ENCODE measurements at regions of chr12 and their contacts with region 1.

Region 1: GRCh38 chr12:39619660-39620433 is at the start of gene ABCD2:
- DNase-seq: peak; percentile 41 to 87 (median 83)
- ATAC-seq: peak; percentile 88
- H3K4me3 ChIP-seq: peak within 1 kb of the TSS; percentile 70
- H3K4me3 Mint-ChIP-seq: no peak within 1 kb of the TSS
- H3K27ac ChIP-seq: peak within 1 kb of the TSS; percentile 91
- H3K27ac Mint-ChIP-seq: no peak within 1 kb of the TSS
- H3K4me1 ChIP-seq: peaks cover 27 to 32% of the 10 kb centered on the region in 2 donors
- H3K4me1 Mint-ChIP-seq: peaks cover 16 to 57% (median 42%) of the 10 kb centered on the region in 7 donors
- H3K27me3 ChIP-seq: no peaks in the 10 kb centered on the region
- H3K27me3 Mint-ChIP-seq: no peaks in the 10 kb centered on the region
- total RNA-seq, gene ABCD2: 7.7 to 32.9 (median 21.0) TPM

Region 2: DNA sequence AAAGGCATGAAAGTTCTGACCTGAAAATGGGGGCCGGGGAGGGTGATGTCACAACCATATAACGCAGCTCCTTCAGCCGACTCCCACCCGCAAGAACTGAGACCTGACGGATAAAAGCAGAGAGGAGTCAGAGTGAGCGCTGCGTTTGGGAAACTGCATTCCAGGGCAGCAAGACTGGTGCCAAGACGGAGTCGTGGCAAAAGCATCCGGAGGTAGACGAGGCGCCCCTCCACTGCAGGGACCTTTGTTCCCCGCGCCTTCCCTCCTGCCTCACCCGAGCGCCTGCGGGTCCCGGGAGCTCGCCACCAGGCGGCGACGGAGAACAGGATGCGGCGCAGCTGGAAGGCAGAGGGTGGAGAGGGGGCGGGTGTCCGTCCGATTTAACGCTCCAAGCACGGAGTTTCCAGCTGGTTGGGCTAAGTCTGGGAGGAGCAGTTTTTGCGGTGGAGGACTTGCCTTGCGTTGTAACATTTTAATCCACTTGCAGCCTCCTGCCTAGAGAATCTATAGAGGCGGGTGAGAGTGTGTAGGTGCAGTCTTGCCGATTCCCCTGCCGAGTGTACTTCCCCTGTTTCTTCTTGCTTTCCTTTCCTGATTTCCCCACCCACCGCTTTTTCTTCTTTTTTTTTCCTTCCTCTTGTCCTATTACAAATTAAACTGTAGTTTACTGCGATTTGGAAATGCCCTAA is 713.2 kb before region 1 on chr12:
- CTCF ChIA-PET with region 1: no interaction called
- POLR2A ChIA-PET with region 1: no interaction called
- intact Hi-C with region 1: loop called (anchors 10 kb)
- DNase-seq: peak; percentile 25 to 83 (median 49)
- ATAC-seq: peak; percentile 77
- H3K4me3 ChIP-seq: peak overlapping the region; percentile 76
- H3K4me3 Mint-ChIP-seq: peak overlapping the region; percentile 86 to 97 (median 92)
- H3K27ac ChIP-seq: no peak overlapping the region
- H3K27ac Mint-ChIP-seq: peak overlapping the region in 6 of 9 donors; percentile 38 to 95 (median 56)
- H3K4me1 ChIP-seq: no peaks in the 10 kb centered on the region
- H3K4me1 Mint-ChIP-seq: peaks cover 17 to 36% (median 25%) of the 10 kb centered on the region in 7 donors
- H3K27me3 ChIP-seq: no peaks in the 10 kb centered on the region
- H3K27me3 Mint-ChIP-seq: peaks cover 6 to 27% (median 21%) of the 10 kb centered on the region in 5 donors

Region 3: GRCh38 chr12:39587225-39587624 is 32.6 kb before region 1 on chr12:
- CTCF ChIA-PET with region 1: interaction called, 10 read pairs
- POLR2A ChIA-PET with region 1: interaction called, 4 read pairs
- intact Hi-C with region 1: loop called (anchors 1 to 2 kb)
- DNase-seq: peak in 7 of 9 donors; percentile 10 to 56 (median 31)
- ATAC-seq: peak; percentile 66
- H3K4me3 ChIP-seq: no peak overlapping the region
- H3K4me3 Mint-ChIP-seq: no peak overlapping the region
- H3K27ac ChIP-seq: no peak overlapping the region
- H3K27ac Mint-ChIP-seq: no peak overlapping the region
- H3K4me1 ChIP-seq: no peaks in the 10 kb centered on the region
- H3K4me1 Mint-ChIP-seq: peaks cover 0 to 17% (median 9%) of the 10 kb centered on the region in 7 donors
- H3K27me3 ChIP-seq: no peaks in the 10 kb centered on the region
- H3K27me3 Mint-ChIP-seq: no peaks in the 10 kb centered on the region

Region 4: GRCh38 chr12:39605501-39605900 is 14.3 kb before region 1 on chr12:
- CTCF ChIA-PET with region 1: interaction called, 6 read pairs
- POLR2A ChIA-PET with region 1: interaction called, 20 read pairs
- intact Hi-C with region 1: loop called (anchors 1 kb)
- DNase-seq: no peak
- ATAC-seq: no peak
- H3K4me3 ChIP-seq: no peak overlapping the region
- H3K4me3 Mint-ChIP-seq: no peak overlapping the region
- H3K27ac ChIP-seq: no peak overlapping the region
- H3K27ac Mint-ChIP-seq: peak overlapping the region in 4 of 9 donors; percentile 7 to 73 (median 40)
- H3K4me1 ChIP-seq: peaks cover 0 to 5% of the 10 kb centered on the region in 2 donors
- H3K4me1 Mint-ChIP-seq: peaks cover 3 to 54% (median 34%) of the 10 kb centered on the region in 7 donors
- H3K27me3 ChIP-seq: no peaks in the 10 kb centered on the region
- H3K27me3 Mint-ChIP-seq: no peaks in the 10 kb centered on the region

Region 5: GRCh38 chr12:39671898-39672875 is 52.3 kb after region 1 on chr12:
- CTCF ChIA-PET with region 1: interaction called, 12 read pairs
- POLR2A ChIA-PET with region 1: interaction called, 22 read pairs
- intact Hi-C with region 1: loop called in 1 of 2 experiments (anchors 1 kb)
- DNase-seq: no peak
- ATAC-seq: no peak
- H3K4me3 ChIP-seq: no peak overlapping the region
- H3K4me3 Mint-ChIP-seq: peak overlapping the region in 1 of 10 donors; percentile 42
- H3K27ac ChIP-seq: no peak overlapping the region
- H3K27ac Mint-ChIP-seq: peak overlapping the region in 4 of 9 donors; percentile 32 to 85 (median 55)
- H3K4me1 ChIP-seq: peaks cover 13 to 16% of the 10 kb centered on the region in 2 donors
- H3K4me1 Mint-ChIP-seq: peaks cover 25 to 77% (median 50%) of the 10 kb centered on the region in 7 donors
- H3K27me3 ChIP-seq: no peaks in the 10 kb centered on the region
- H3K27me3 Mint-ChIP-seq: no peaks in the 10 kb centered on the region

Region 6: DNA sequence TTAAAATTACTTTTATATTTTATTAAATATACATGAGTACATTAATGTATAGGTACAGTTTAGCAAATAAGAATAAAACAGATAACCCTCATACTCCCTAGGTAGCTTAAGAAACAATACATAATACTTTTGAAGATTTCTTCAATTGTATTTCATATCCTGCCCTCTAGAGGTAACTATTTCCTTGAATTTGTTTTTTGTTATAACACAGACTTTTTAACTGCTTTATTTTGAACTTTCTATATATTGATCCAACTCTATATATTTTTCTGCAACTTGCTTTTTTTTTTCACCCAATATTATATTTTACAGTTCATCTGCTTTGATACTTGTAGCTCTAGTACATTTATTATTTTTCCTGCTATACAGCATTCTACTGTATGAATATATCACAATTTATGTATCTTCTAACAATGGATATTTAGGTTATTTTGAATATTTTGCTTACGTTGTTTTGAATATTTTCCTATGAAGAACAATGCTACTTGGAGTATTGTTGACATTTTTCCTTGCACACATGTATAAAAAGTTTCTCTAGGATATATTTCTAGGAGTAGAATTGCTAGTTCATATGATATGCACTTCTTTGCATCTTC is 72.5 kb after region 1 on chr12:
- CTCF ChIA-PET with region 1: interaction called, 22 read pairs
- POLR2A ChIA-PET with region 1: interaction called, 13 read pairs
- intact Hi-C with region 1: loop called (anchors 1 kb)
- DNase-seq: peak in 5 of 9 donors; percentile 29 to 47 (median 43)
- ATAC-seq: peak; percentile 64
- H3K4me3 ChIP-seq: no peak overlapping the region
- H3K4me3 Mint-ChIP-seq: peak overlapping the region in 1 of 10 donors; percentile 15
- H3K27ac ChIP-seq: no peak overlapping the region
- H3K27ac Mint-ChIP-seq: no peak overlapping the region
- H3K4me1 ChIP-seq: peaks cover 0 to 3% of the 10 kb centered on the region in 2 donors
- H3K4me1 Mint-ChIP-seq: peaks cover 0 to 7% (median 5%) of the 10 kb centered on the region in 7 donors
- H3K27me3 ChIP-seq: no peaks in the 10 kb centered on the region
- H3K27me3 Mint-ChIP-seq: peaks cover 0 to 12% (median 8%) of the 10 kb centered on the region in 5 donors